ENCODE measurements at regions of chr4 and their contacts with region 1.

Region 1: GRCh38 chr4:10403633-10404445 is 53.4 kb downstream of the ZNF518B start:
- DNase-seq: peak in 1 of 2 donors; percentile 11
- ATAC-seq: peak in 4 of 8 donors; percentile 56 to 67 (median 63)
- H3K4me3 ChIP-seq: no peak overlapping the region
- H3K27ac ChIP-seq: no peak overlapping the region
- H3K4me1 ChIP-seq: peaks cover 0 to 10% (median 0%) of the 10 kb centered on the region in 9 donors
- H3K27me3 ChIP-seq: no peaks in the 10 kb centered on the region
- CTCF ChIP-seq: peak in 8 of 9 donors; percentile 19 to 70 (median 59)

Region 2: GRCh38 chr4:10157478-10158332 is 246.1 kb before region 1 on chr4:
- intact Hi-C with region 1: loop called in 5 of 10 experiments (anchors 1 to 5 kb)
- DNase-seq: peak in 1 of 2 donors; percentile 46
- ATAC-seq: peak; percentile 57 to 82 (median 68)
- H3K4me3 ChIP-seq: no peak overlapping the region
- H3K27ac ChIP-seq: no peak overlapping the region
- H3K4me1 ChIP-seq: peaks cover 0 to 8% (median 0%) of the 10 kb centered on the region in 9 donors
- H3K27me3 ChIP-seq: no peaks in the 10 kb centered on the region
- CTCF ChIP-seq: peak; percentile 69 to 87 (median 80)

Region 3: DNA sequence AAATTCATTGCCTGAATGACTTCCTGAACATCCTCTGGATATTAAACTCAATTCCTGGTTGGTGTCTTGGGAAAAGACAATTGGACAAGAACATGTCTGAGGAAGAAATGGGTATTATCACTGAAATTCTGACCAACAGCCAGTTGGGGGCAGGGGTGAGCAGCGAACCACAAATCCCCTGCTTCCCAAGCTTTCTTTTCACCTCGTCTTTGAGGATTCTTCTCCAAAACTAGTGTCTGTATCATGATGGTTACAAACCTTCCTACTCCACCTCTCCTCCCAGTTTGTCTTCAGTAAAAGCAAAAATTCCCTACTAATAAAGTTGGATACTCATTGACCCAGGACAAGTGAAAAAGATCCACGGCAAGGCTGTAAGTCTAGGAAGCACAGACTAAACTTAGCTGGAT is 239.0 kb before region 1 on chr4:
- intact Hi-C with region 1: loop called in 9 of 10 experiments (anchors 1 to 5 kb)
- DNase-seq: peak in 1 of 2 donors; percentile 25
- ATAC-seq: no peak
- H3K4me3 ChIP-seq: no peak overlapping the region
- H3K27ac ChIP-seq: no peak overlapping the region
- H3K4me1 ChIP-seq: peaks cover 0 to 14% (median 0%) of the 10 kb centered on the region in 9 donors
- H3K27me3 ChIP-seq: peaks cover 0 to 3% (median 0%) of the 10 kb centered on the region in 7 donors
- CTCF ChIP-seq: peak; percentile 23 to 77 (median 64)

Region 4: DNA sequence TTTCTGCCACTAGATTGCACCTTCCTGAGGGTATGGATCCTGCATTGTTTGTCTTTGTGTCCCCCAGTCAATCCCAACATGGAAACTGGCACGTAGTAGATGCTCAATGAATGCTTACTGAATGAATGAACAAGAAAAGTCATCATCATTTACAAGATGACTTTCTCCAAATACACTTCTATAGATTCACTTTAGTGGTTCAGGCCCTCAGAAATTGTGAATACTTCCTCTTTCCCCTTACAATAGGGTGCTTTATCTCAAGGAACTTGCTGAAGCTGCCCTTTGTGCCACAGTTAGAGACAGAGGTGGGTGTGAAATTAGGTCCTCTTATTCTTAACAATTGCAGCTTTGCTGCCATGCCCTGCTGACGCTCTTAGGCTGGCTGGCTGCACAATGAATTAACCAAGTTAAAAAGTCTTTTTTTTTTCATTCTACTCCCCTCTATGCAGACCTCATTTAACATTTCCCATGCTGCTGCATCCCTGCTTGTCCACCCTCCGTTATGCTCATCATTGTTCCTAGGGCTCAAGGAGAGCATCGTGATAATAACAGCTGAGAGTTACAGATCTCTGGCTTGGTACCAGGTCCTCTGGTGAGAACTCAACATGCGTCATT is 161.4 kb after region 1 on chr4:
- intact Hi-C with region 1: no loop called
- DNase-seq: no peak
- ATAC-seq: no peak
- H3K4me3 ChIP-seq: no peak overlapping the region
- H3K27ac ChIP-seq: no peak overlapping the region
- H3K4me1 ChIP-seq: no peaks in the 10 kb centered on the region
- H3K27me3 ChIP-seq: peaks cover 0 to 13% (median 2%) of the 10 kb centered on the region in 7 donors
- CTCF ChIP-seq: no peak